GM12878 (cell line): ENCODE measurements at regions of chr19 and their contacts with region 1.

Region 1: DNA sequence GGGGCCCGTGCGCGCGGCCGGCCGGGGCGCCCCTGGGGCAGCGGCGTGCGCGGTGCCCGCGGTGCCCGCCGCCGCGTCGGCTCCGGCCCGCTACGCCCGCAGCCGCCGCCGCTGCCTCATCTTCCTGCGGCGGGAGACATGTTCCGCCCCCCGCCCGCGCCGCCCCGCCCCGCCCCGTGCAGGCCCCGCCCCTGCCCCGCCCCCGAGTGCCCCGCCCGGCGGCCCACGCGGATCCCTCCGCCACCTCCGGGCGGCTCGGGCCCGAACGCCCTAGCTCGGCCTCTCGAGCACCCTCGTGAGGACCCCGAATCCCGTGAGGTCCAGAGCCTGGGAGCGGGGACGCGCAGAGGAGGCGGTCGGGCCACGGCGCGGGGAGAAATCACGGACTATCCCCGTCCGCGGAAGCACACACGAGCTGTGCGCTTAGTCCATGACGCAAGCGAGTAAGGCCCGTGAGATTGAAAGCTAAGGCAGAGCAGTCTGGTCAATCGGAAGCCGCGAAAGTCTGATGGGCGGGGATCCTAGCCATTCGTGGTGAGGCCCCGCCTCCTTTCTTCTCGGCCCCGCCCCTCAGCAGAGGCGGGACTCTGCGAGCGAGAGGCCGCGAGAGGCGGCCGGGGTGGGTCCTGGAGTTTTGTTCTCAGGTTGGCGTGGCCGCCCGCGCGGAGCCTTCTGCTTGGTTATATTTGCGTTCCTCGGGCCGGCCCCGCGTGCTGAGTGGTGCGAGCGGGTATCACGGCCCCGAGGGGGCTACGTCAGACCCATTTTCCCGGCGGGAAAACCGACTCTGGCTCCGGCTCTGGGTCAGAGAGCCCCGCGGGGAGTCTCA is at the start of gene TCF3:
- DNase-seq: peak; percentile 95
- ATAC-seq: peak; percentile 76
- H3K4me3 ChIP-seq: peak within 1 kb of the TSS; percentile 91
- H3K27ac ChIP-seq: peak within 1 kb of the TSS; percentile 100
- H3K4me1 ChIP-seq: peaks cover 23% of the 10 kb centered on the region
- H3K27me3 ChIP-seq: no peaks in the 10 kb centered on the region
- CTCF ChIP-seq: no peak
- EP300 ChIP-seq: peak in 1 of 2 experiments; percentile 54; a peak in 1 of 4 replicates
- POLR2A ChIP-seq: peak; percentile 71
- RAD21 ChIP-seq: no peak
- polyA plus RNA-seq, gene TCF3: 6.7 to 24.0 TPM

Region 2: DNA sequence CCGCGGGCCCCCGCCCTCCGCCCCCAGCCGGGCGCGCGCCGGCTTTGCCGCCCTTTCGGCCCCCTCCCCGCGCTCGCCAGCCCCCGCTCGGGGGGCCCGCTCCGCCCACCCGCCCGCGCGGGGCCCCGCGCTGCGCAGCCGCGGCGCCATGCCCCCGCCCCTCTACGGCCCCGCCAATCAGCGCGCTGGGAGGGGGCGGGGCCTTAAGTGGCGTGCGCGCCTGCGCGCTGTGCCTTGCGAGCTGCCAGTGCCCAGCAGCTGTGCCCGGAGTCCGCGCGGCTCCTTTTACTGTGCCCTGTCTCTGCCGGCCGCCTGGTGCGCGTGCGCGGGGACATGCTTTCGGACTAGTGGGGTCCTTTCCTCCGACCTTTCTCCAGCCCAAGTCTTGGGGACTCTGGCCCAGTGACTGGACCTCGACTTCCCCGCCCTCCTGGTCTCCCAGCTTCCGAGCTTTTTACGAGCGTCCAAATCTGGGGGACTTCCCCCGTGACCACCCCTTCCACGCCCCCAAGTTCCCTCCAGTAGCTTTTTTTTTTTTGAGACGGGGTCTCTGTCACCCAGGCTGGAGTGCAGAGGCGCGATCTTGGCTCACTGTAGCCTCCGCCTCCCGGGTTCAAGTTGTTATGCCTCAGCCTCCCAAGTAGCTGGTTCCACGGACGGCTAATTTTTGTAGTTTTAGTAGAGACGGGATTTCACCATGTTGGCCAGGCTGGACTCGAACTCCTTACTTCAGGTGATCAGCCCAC is 59.8 kb before region 1 on chr19 and contains the start of gene MBD3:
- CTCF ChIA-PET with region 1: interaction called, 8 read pairs
- POLR2A ChIA-PET with region 1: interaction called, 10 read pairs
- RAD21 ChIA-PET with region 1: interaction called, 7 read pairs
- SMC1A ChIA-PET with region 1: interaction called, 4 read pairs
- in situ Hi-C with region 1: no loop called
- intact Hi-C with region 1: no loop called
- DNase-seq: peak; percentile 44
- ATAC-seq: peak; percentile 81
- H3K4me3 ChIP-seq: peak within 1 kb of the TSS; percentile 98
- H3K27ac ChIP-seq: peak within 1 kb of the TSS; percentile 92
- H3K4me1 ChIP-seq: peaks cover 4% of the 10 kb centered on the region; the same call in 1 of the 2 replicates
- H3K27me3 ChIP-seq: no peaks in the 10 kb centered on the region
- CTCF ChIP-seq: no peak
- EP300 ChIP-seq: no peak
- POLR2A ChIP-seq: peak; percentile 72
- RAD21 ChIP-seq: no peak
- polyA plus RNA-seq, gene MBD3: 0.13 to 1.7 TPM

Region 3: GRCh38 chr19:1605236-1606137 is 47.2 kb before region 1 on chr19 and contains the start of gene UQCR11:
- CTCF ChIA-PET with region 1: interaction called, 3 read pairs
- POLR2A ChIA-PET with region 1: interaction called, 3 read pairs
- RAD21 ChIA-PET with region 1: interaction called, 4 read pairs
- SMC1A ChIA-PET with region 1: interaction called, 7 read pairs
- in situ Hi-C with region 1: loop called (anchors 5 kb)
- intact Hi-C with region 1: loop called (anchors 5 kb)
- DNase-seq: peak; percentile 80
- ATAC-seq: peak; percentile 96
- H3K4me3 ChIP-seq: peak within 1 kb of the TSS; percentile 91
- H3K27ac ChIP-seq: peak within 1 kb of the TSS; percentile 83
- H3K4me1 ChIP-seq: peaks cover 9% of the 10 kb centered on the region
- H3K27me3 ChIP-seq: no peaks in the 10 kb centered on the region
- CTCF ChIP-seq: peak; percentile 70 to 87 (median 76)
- EP300 ChIP-seq: no peak
- POLR2A ChIP-seq: peak; percentile 69
- RAD21 ChIP-seq: peak; percentile 74
- polyA plus RNA-seq, gene UQCR11: 166 to 418 TPM

Region 4: DNA sequence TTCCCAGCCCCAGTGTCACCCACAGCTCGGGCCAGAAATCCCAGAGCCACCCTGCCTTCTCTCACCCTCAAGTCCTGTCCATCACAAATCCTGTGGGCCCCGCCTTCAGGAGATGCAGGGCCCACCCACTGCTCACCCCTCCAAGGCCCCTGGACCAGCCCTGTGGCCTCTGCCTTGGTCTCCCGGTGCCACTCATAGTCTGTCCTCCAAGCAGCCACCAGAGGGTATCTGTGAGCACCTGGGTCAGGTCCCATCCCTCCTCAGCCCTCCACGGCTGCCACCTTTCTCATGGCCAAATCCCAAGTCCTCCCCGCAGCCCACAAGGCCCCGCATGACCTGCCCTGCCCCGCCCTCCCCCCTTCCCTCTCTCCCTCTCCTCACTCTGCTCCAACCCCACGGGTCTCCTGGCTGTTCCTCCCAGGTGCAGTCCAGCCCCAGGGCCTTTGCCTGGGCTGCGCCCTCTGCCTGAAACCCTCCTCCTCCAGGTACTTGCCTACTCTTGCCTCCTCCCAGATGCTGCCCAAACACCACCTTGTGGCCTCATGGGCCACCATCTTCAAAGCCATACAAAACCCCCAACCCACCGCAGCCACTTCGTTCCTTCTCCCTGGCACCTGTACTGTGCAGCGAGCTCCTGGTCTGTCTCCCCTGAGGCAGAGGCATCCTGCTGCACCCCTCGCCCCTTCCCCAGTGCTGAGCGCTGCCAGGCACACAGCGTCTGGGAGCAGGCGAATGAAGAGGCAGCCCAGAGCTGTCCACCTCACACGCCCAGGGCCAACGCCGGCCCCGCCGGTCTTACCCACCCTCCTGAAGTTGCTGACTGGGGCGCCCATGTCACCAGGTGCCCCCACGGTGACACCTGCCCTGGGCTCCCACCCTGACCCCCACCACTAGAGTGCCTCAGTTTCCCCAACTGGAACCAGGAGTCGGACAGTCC is 34.3 kb before region 1 on chr19:
- CTCF ChIA-PET with region 1: interaction called, 4 read pairs
- POLR2A ChIA-PET with region 1: no interaction called
- RAD21 ChIA-PET with region 1: interaction called, 3 read pairs
- SMC1A ChIA-PET with region 1: no interaction called
- in situ Hi-C with region 1: no loop called
- intact Hi-C with region 1: loop called (anchors 2 kb)
- DNase-seq: no peak
- ATAC-seq: peak; percentile 95
- H3K4me3 ChIP-seq: no peak overlapping the region
- H3K27ac ChIP-seq: no peak overlapping the region
- H3K4me1 ChIP-seq: no peaks in the 10 kb centered on the region
- H3K27me3 ChIP-seq: no peaks in the 10 kb centered on the region
- CTCF ChIP-seq: peak; percentile 48 to 72 (median 52)
- EP300 ChIP-seq: no peak
- POLR2A ChIP-seq: peak; percentile 26
- RAD21 ChIP-seq: peak; percentile 47

Region 5: GRCh38 chr19:1665565-1666047 is 12.9 kb after region 1 on chr19:
- CTCF ChIA-PET with region 1: interaction called, 9 read pairs
- POLR2A ChIA-PET with region 1: interaction called, 13 read pairs
- RAD21 ChIA-PET with region 1: interaction called, 19 read pairs
- SMC1A ChIA-PET with region 1: interaction called, 30 read pairs
- in situ Hi-C with region 1: no loop called
- intact Hi-C with region 1: loop called (anchors 2 kb)
- DNase-seq: no peak
- ATAC-seq: peak; percentile 30
- H3K4me3 ChIP-seq: no peak overlapping the region
- H3K27ac ChIP-seq: 0 out of 2 replicates have a peak overlapping the region, but pooled peaks have one; percentile 4
- H3K4me1 ChIP-seq: peaks cover 57% of the 10 kb centered on the region
- H3K27me3 ChIP-seq: no peaks in the 10 kb centered on the region
- CTCF ChIP-seq: 0 out of 6 replicates have a peak, but pooled peaks of 1 of the 3 experiments have one; percentile 1
- EP300 ChIP-seq: no peak
- POLR2A ChIP-seq: no peak
- RAD21 ChIP-seq: no peak